ENCODE measurements at regions of chr4 and their contacts with region 1.

Region 1: GRCh38 chr4:26319467-26319948 is 1.3 kb upstream of the RBPJ start:
- DNase-seq: peak; percentile 90 to 99 (median 96)
- H3K4me3 ChIP-seq: peak overlapping the region; percentile 64 to 92 (median 82)
- H3K27ac ChIP-seq: peak overlapping the region; percentile 81 to 99 (median 96)
- H3K27me3 ChIP-seq: no peaks in the 10 kb centered on the region
- CTCF ChIP-seq: peak in 42 of 56 donors; percentile 10 to 61 (median 40)

Region 2: DNA sequence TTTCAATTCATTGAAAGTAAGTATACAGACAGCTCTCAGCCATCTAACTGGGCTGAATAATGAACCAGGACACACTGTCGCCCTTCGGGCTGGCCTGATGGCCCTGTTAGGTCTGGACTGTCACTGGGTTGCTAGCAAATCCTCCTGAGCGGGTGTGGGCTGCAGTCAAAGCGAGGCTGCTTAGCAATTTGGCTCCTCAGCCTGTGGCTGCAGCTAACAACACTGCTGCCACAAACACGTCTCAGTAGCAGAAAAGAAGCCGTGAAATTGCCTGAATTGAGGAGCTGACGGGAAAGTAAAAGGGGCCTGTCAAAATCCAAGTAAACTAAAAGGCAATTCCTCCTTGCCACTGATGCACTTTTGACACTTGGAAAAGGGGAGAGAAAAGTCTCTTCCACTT is 332.7 kb before region 1 on chr4:
- intact Hi-C with region 1: loop called (anchors 2 kb)
- DNase-seq: no peak
- H3K4me3 ChIP-seq: peak overlapping the region in 3 of 59 donors; percentile 5 to 20 (median 20)
- H3K27ac ChIP-seq: peak overlapping the region in 6 of 59 donors; percentile 8 to 49 (median 41)
- H3K27me3 ChIP-seq: no peaks in the 10 kb centered on the region
- CTCF ChIP-seq: no peak

Region 3: DNA sequence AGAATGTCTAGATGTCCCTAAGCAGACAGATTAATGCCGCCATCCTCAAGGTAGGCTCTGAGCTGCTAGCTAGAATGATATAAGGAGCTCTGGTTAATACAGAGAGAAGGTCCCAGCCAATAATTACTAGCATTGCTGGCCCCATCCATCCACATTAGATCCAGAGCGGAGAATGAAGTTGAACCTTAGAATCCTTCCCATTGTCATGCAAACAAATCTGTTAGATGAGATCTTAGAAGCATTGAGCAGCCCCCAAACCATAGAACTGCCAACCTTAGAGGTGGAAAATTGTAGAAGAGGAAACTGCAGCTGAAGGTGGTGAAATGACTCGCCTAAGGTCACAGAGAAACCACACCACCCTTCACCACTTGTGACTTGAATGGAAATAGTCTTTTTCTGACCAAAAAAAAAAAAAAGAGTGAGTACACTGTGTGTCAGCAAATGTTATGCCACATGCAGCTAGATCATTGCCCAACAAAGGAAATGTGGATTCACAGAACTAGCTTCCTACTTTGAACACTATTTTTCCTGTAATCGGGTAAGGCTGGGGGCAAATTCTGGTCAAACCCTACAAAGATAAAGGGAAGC is 243.4 kb before region 1 on chr4:
- intact Hi-C with region 1: loop called in 1 of 2 experiments (anchors 5 kb)
- DNase-seq: no peak
- H3K4me3 ChIP-seq: no peak overlapping the region
- H3K27ac ChIP-seq: peak overlapping the region in 12 of 59 donors; percentile 2 to 66 (median 24)
- H3K27me3 ChIP-seq: peaks cover 0 to under 1% (median 0%) of the 10 kb centered on the region in 45 donors
- CTCF ChIP-seq: no peak

Region 4: DNA sequence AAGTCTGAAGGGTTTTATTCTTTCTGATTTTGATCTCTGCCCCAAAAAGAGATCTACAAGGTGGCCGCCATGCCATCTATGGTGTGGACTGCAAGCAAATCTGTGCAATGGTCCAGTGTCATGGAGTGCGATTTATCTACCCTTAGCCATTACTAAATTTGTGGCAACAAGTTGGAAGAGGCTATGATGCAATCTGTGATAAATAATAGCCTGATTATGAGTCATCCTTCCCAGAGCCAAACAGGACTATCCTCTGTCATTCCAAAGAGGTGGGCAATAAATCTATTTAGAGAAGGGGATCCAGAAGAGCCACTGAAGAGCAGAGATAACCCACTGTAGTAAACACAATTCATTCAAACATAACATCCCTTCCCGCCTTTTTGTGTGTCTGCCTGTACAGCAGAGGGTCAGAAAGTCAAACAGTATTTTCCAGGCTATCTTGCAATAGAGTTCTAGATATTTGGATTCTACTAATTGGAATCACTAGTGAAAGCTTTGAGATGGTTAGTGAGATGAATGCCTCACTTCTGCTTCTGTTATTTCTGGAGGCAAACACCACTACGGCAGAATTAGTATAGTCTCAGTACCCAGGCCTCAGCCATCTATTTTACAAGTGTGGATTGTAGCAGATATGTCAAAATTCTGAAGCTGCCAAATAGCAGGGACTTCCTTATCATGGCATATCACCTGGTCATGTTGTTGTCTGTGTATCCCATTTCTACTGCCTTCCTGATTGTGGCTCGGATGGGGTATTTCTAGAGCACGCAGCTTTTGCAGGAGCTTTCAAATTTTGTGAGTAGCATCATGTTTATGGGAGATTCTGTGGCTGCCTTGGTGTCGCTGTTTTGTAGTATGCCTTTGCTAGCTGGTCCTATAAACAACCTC is 213.5 kb before region 1 on chr4:
- intact Hi-C with region 1: no loop called
- DNase-seq: no peak
- H3K4me3 ChIP-seq: no peak overlapping the region
- H3K27ac ChIP-seq: no peak overlapping the region
- H3K27me3 ChIP-seq: peaks cover 0 to 3% (median 0%) of the 10 kb centered on the region in 45 donors
- CTCF ChIP-seq: no peak

Region 5: GRCh38 chr4:26206339-26206738 is 113.2 kb before region 1 on chr4:
- intact Hi-C with region 1: loop called in 1 of 2 experiments (anchors 10 kb)
- DNase-seq: no peak
- H3K4me3 ChIP-seq: no peak overlapping the region
- H3K27ac ChIP-seq: peak overlapping the region in 54 of 59 donors; percentile 11 to 100 (median 96)
- H3K27me3 ChIP-seq: peaks cover 0 to 11% (median 0%) of the 10 kb centered on the region in 45 donors
- CTCF ChIP-seq: no peak

Region 6: DNA sequence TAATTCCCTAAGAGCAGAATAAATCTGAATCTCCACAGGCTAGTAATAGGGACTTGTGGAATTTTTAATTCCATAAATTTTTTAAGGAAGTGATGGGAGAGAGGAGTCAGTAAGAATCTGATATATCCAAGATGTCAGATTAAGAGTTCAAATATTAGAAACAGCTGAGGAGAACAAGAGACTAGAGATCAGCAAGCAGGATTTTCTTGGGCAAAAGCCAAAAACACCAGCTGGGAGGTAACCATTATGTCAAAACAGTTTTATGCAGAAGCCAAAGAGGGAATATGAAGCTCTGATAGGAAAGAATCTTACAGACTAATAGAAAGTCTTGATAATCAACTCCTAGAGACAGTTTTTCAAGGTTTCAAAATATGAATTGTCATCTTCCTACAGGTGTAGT is 70.9 kb before region 1 on chr4:
- intact Hi-C with region 1: loop called in 1 of 2 experiments (anchors 10 kb)
- DNase-seq: no peak
- H3K4me3 ChIP-seq: no peak overlapping the region
- H3K27ac ChIP-seq: peak overlapping the region in 1 of 59 donors; percentile 29
- H3K27me3 ChIP-seq: no peaks in the 10 kb centered on the region
- CTCF ChIP-seq: no peak

Region 7: GRCh38 chr4:26583865-26584652 is 264.6 kb after region 1 on chr4 and contains the start of gene TBC1D19:
- intact Hi-C with region 1: loop called in 1 of 2 experiments (anchors 5 kb)
- DNase-seq: peak; percentile 78 to 93 (median 88)
- H3K4me3 ChIP-seq: peak within 1 kb of the TSS; percentile 55 to 98 (median 85)
- H3K27ac ChIP-seq: peak within 1 kb of the TSS; percentile 21 to 92 (median 76)
- H3K27me3 ChIP-seq: no peaks in the 10 kb centered on the region
- CTCF ChIP-seq: peak in 37 of 56 donors; percentile 8 to 61 (median 29)
- total RNA-seq, gene TBC1D19: 14.4 to 38.3 (median 22.7) TPM